Activated T-helper 1 cell treated with anti-CD3 and anti-CD28 coated beads, Interleukin-12 subunit alpha, Interleukin-12 subunit beta, Interleukin-2, Interleukin-4 antibody, amounts not matched to agents 30 ng/mL and 10 ng/mL and 1 ng/mL, durations not matched to agents 14 hours and 24 hours and 36 hours (primary cell): ENCODE measurements at regions of chr1 and their contacts with region 1.

Region 1: GRCh38 chr1:30718636-30719405 is 4.6 kb downstream of the MATN1 start:
- DNase-seq: peak; percentile 95
- H3K4me3 Mint-ChIP-seq: peak overlapping the region; percentile 89
- H3K27ac Mint-ChIP-seq: peak overlapping the region; percentile 93
- H3K4me1 Mint-ChIP-seq: peaks cover 20% of the 10 kb centered on the region
- H3K27me3 Mint-ChIP-seq: peaks cover 3% of the 10 kb centered on the region

Region 2: DNA sequence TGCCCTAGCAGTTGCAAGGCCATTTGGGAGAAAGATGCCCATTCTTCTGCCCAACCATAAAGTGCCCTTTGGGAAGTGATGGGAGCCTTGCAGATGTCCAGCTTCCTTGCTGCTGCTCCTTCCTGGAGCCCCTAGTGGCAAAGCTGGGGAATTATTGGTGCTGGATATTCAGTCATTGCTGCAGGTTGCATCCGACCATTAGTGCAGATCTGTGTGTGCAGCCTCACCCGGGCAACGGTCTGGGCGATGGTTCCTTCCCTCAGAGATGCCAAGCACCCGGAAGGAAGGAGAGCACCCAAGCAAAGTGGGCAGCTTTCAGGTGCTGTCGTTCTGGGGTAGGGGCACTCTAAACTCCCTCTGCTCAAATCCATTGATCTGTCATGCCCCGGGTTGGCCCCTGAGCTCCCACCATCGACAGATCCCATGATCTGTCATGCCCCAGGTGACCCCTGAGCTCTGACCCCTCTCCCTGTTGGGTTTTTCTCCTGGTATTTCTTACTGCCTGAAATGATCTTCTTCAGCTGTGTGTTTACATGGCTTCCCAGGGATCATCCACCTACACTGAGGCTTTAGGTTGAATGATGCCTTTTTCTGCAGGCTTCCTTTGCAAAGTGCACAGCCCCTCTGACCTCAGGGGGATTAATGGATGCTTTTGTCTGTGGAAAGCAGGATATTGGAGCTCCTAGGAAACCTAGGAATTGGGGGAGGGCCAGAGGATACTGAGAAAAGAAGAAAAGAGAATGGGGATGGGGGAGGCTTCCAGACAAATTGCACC is 1015.0 kb before region 1 on chr1:
- intact Hi-C with region 1: loop called (anchors 10 kb)
- DNase-seq: no peak
- H3K4me3 Mint-ChIP-seq: no peak overlapping the region
- H3K27ac Mint-ChIP-seq: no peak overlapping the region
- H3K4me1 Mint-ChIP-seq: peaks cover 11% of the 10 kb centered on the region
- H3K27me3 Mint-ChIP-seq: peaks cover 20% of the 10 kb centered on the region

Region 3: GRCh38 chr1:30756545-30757195 is 37.8 kb after region 1 on chr1:
- intact Hi-C with region 1: loop called (anchors 1 kb)
- DNase-seq: peak; percentile 64
- H3K4me3 Mint-ChIP-seq: peak overlapping the region; percentile 99
- H3K27ac Mint-ChIP-seq: peak overlapping the region; percentile 97
- H3K4me1 Mint-ChIP-seq: peaks cover 99% of the 10 kb centered on the region
- H3K27me3 Mint-ChIP-seq: no peaks in the 10 kb centered on the region

Region 4: GRCh38 chr1:30911046-30911954 is 192.5 kb after region 1 on chr1:
- intact Hi-C with region 1: loop called (anchors 1 kb)
- DNase-seq: peak; percentile 13
- H3K4me3 Mint-ChIP-seq: no peak overlapping the region
- H3K27ac Mint-ChIP-seq: no peak overlapping the region
- H3K4me1 Mint-ChIP-seq: peaks cover 8% of the 10 kb centered on the region
- H3K27me3 Mint-ChIP-seq: peaks cover 35% of the 10 kb centered on the region

Region 5: GRCh38 chr1:30923597-30923996 is 204.8 kb after region 1 on chr1:
- intact Hi-C with region 1: no loop called
- DNase-seq: no peak
- H3K4me3 Mint-ChIP-seq: no peak overlapping the region
- H3K27ac Mint-ChIP-seq: no peak overlapping the region
- H3K4me1 Mint-ChIP-seq: no peaks in the 10 kb centered on the region
- H3K27me3 Mint-ChIP-seq: peaks cover 25% of the 10 kb centered on the region

Region 6: GRCh38 chr1:31155216-31155841 is 436.5 kb after region 1 on chr1:
- intact Hi-C with region 1: loop called (anchors 2 kb)
- DNase-seq: peak; percentile 64
- H3K4me3 Mint-ChIP-seq: peak overlapping the region; percentile 94
- H3K27ac Mint-ChIP-seq: peak overlapping the region; percentile 86
- H3K4me1 Mint-ChIP-seq: peaks cover 5% of the 10 kb centered on the region
- H3K27me3 Mint-ChIP-seq: peaks cover 6% of the 10 kb centered on the region